ENCODE measurements at regions of chr13 and their contacts with region 1.

Region 1: DNA sequence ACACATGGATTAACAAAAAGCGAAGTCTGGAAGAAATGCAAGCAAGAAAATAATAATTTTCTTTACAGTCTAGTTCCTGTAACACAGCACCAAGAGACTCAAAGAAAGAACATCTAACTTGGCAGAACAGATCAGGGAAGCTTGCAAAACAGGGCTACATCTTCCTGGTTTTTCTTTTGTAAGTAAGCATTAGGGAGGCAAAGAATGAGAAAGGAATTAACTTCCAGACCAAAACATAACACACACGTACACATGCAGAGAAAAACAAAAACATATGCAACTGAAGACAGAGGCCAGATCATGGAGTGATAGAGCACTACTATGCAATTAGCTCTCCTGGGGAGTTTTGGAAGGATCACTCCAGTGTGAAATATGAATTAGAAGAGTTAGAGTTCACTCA is 120.5 kb downstream of the DIAPH3 start:
- DNase-seq: no peak

Region 2: DNA sequence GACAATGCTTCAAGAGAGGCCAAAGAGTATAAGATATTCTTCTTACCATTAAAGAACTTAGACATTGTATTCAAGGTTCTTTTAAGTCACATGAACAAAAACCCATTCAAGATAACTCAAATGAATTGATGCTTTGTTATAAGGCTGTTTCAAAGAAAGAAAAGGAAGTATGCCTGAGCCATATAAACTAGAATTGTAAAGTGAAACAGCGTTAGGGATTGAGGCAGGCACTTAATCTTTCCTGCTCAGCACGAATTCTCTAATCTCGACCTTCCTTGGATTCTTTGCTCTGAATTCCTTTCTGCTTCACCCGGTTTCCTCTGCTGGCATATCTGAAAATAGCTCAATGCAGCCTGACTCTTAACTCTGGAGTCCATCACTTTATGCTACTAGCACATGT is 475.0 kb before region 1 on chr13:
- intact Hi-C with region 1: no loop called
- DNase-seq: no peak

Region 3: DNA sequence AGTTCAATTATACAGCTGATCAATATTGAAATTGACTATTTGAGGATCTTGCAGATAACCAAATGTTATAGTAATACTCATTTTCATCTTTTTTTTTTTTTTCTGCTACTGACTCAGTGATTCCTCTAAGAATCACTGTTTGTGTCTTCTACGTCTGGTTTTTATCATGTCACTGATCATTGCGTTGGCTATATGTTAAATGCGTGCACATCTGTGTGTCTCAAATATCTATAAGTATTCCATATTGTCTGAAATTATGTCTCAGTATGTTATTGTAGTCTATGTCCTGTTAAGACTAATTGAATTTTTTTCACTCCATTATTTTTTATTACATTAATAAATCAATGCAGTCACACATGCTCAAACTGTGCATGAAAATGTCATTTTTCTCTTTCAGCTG is 1171.9 kb after region 1 on chr13:
- intact Hi-C with region 1: loop called in 1 of 2 experiments (anchors 5 kb)
- DNase-seq: no peak